Posterior vena cava (tissue), 2 donors: ENCODE measurements at regions of chr14 and their contacts with region 1.

Region 1: DNA sequence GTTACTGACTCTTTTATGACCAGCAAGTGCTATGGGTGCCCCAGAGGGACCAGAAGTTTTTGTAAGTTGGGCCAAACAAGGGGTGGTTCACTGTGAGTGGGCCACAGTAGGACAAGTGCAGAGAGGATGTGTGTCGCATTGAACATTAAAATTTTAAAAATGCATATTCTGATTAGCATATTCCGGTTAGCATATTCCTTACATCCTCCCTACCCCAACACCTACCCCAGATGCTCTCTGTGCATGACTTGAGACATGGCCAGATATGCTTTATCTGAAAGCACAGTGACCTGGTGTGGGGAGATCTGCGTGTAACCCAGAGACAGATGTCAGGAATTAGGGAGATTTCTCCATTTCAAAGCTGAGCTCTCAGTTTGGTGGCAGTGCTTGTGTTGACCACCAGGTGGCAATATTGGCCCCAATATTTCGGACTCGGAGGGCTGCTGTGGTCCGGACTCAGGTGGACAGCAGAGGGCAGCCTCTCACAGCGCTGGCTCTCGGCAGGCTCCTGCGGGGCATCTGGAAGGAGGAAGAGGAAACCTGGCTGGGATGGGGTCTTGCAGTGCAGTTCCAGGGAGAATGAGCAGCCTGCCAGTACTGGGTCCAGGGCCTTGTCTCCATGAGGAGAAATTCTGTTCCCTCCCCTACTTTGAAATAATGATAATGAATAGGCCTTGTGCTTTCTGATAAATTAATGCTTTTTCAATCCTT is 1.6 kb upstream of the CEBPE start:
- DNase-seq: peak; percentile 96

Region 2: GRCh38 chr14:23186913-23187654 is 66.4 kb after region 1 on chr14:
- intact Hi-C with region 1: loop called (anchors 2 kb)
- DNase-seq: no peak